GM12878 (cell line): ENCODE measurements at regions of chr9 and their contacts with region 1.

Region 1: DNA sequence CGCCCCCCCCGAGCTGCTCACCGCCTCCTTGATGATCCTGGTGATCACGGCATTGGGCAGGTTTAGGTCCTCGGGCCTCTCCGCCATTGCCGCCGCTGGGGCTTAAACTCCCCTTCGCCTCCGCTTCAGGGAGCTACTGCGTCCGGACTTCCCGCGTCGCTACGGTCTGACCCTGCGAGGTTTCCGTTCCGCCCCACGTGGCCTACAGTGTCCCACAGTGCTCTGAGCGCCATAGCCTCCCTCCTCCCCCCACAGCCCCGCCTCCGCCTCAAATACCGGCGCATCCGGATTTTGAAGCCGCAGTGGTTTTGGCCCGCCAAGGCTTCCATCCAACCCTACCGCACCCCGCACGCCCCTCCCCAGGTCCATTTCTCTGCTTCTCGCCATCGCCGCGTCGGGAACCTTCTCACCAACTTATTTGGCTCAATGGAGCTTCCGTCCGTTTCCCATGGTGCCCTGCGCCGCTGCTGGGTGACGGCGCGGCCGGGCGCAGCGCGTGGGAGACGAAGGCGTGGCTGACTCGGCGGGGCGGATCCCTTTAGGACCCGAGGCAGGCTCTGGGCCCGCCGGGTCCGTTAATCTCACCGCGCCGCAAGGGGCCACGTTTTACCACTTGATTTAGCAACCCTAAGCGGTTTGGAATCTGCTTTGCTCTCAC is at the starts of genes C9orf43 and POLE3:
- DNase-seq: peak; percentile 80
- ATAC-seq: peak; percentile 96
- H3K4me3 ChIP-seq: peak within 1 kb of the TSS; percentile 92
- H3K27ac ChIP-seq: peak within 1 kb of the TSS; percentile 98
- H3K4me1 ChIP-seq: peaks cover 16% of the 10 kb centered on the region; the same call in 1 of the 2 replicates
- H3K27me3 ChIP-seq: no peaks in the 10 kb centered on the region
- CTCF ChIP-seq: no peak; a peak in 1 of 6 replicates
- EP300 ChIP-seq: 0 out of 4 replicates have a peak, but pooled peaks of 1 of the 2 experiments have one; percentile 15
- POLR2A ChIP-seq: peak; percentile 90
- RAD21 ChIP-seq: no peak
- polyA plus RNA-seq, gene C9orf43: 0.23 to 0.51 TPM
- polyA plus RNA-seq, gene POLE3: 40.8 to 65.9 TPM

Region 2: GRCh38 chr9:113309204-113309813 is 101.0 kb before region 1 on chr9:
- CTCF ChIA-PET with region 1: interaction called, 7 read pairs
- POLR2A ChIA-PET with region 1: no interaction called
- RAD21 ChIA-PET with region 1: interaction called, 4 read pairs
- SMC1A ChIA-PET with region 1: interaction called, 14 read pairs
- in situ Hi-C with region 1: no loop called
- intact Hi-C with region 1: loop called (anchors 1 kb)
- DNase-seq: no peak
- ATAC-seq: peak; percentile 65
- H3K4me3 ChIP-seq: no peak overlapping the region
- H3K27ac ChIP-seq: no peak overlapping the region
- H3K4me1 ChIP-seq: no peaks in the 10 kb centered on the region
- H3K27me3 ChIP-seq: no peaks in the 10 kb centered on the region
- CTCF ChIP-seq: peak; percentile 56 to 73 (median 62); a peak in 5 of 6 replicates
- EP300 ChIP-seq: no peak
- POLR2A ChIP-seq: no peak
- RAD21 ChIP-seq: peak; percentile 91

Region 3: GRCh38 chr9:113355040-113355596 is 55.2 kb before region 1 on chr9:
- CTCF ChIA-PET with region 1: interaction called, 6 read pairs
- POLR2A ChIA-PET with region 1: interaction called, 5 read pairs
- RAD21 ChIA-PET with region 1: interaction called, 4 read pairs
- SMC1A ChIA-PET with region 1: no interaction called
- in situ Hi-C with region 1: no loop called
- intact Hi-C with region 1: loop called (anchors 1 kb)
- DNase-seq: no peak
- ATAC-seq: peak; percentile 55
- H3K4me3 ChIP-seq: no peak overlapping the region
- H3K27ac ChIP-seq: no peak overlapping the region
- H3K4me1 ChIP-seq: peaks cover 14% of the 10 kb centered on the region
- H3K27me3 ChIP-seq: no peaks in the 10 kb centered on the region; a peak in 1 of 4 replicates
- CTCF ChIP-seq: peak; percentile 28 to 46 (median 45); a peak in 4 of 6 replicates
- EP300 ChIP-seq: no peak
- POLR2A ChIP-seq: no peak
- RAD21 ChIP-seq: peak; percentile 42; the same call in 1 of the 2 replicates